MCF 10A (cell line): ENCODE measurements at regions of chr18 and their contacts with region 1.

Region 1: DNA sequence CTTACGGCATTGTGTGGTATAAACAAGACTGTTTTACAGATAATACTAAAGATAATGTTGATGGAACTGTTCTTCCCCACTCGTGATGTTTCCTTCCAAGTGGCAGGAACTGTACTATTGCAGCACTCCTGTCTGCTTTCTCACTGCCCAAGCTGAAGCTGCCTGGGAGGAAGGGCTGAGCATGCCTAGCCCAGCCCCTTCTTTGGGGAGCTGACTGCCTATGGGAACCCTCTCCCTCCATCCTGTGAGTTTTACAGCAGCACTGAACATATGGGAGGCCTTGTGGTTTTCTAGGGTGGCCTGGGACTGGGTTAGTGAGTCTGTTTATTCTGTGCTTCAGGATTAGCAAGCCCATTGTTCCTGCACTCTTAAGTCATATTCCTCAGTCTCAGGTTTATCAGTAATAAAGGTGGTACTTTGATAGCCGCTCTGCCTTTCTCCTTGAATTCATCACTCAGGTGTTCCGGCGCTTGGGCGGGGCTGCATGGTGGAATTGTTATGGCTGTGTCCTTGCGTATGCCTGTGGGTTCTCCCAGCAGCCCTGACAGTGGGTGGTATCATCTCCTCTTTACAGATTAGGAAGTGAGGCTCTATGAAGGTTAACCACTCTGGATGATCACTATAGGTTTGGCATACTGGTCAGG is 379.7 kb downstream of the PTPRM start:
- DNase-seq: peak; percentile 60
- H3K4me3 Mint-ChIP-seq: peak overlapping the region; percentile 66
- H3K27ac Mint-ChIP-seq: peak overlapping the region; percentile 82
- H3K4me1 Mint-ChIP-seq: peaks cover 54% of the 10 kb centered on the region
- H3K27me3 Mint-ChIP-seq: no peaks in the 10 kb centered on the region
- CTCF ChIP-seq: no peak

Region 2: DNA sequence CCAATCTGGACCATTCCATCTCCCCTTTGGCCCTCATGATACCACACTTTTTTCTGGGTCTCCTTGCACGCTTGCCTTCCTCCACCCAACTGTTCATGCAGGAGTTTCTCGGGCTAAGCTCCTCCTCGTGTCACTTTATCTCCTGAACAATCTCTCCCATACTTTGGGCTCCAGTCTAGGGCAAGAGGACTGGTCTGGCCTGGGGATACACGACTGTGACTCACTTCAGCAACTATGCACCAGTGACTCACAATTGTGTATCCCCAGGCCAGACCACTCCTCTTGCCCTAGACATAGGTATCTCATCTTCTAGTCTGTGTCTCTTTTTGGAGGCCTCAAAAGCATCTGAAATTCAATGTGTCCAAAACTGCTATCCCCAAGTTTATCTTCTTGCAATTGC is 529.1 kb before region 1 on chr18:
- CTCF ChIA-PET with region 1: no interaction called
- POLR2A ChIA-PET with region 1: no interaction called
- intact Hi-C with region 1: loop called (anchors 5 kb)
- DNase-seq: peak; percentile 95
- H3K4me3 Mint-ChIP-seq: peak overlapping the region; percentile 9
- H3K27ac Mint-ChIP-seq: peak overlapping the region; percentile 68
- H3K4me1 Mint-ChIP-seq: peaks cover 41% of the 10 kb centered on the region
- H3K27me3 Mint-ChIP-seq: no peaks in the 10 kb centered on the region
- CTCF ChIP-seq: no peak

Region 3: DNA sequence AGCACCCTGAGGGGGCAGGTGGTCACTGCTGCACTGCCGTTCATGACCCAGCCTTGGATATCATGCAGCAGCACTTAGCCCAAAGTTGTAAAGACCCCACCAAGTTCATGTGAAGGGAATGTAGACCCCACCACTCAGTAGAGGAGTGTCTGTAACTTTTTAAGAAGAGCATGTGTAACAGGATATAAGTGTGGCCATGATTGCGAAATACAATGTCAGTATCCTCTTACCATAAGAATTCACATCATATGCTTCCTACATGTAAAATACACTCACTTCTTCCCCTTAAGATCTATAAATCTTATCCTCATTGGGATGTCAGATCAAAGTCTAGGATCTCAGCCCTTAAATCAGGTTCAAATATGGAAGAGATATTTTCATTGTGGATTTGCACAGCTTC is 102.8 kb before region 1 on chr18:
- CTCF ChIA-PET with region 1: no interaction called
- POLR2A ChIA-PET with region 1: no interaction called
- intact Hi-C with region 1: no loop called
- DNase-seq: no peak
- H3K4me3 Mint-ChIP-seq: no peak overlapping the region
- H3K27ac Mint-ChIP-seq: no peak overlapping the region
- H3K4me1 Mint-ChIP-seq: no peaks in the 10 kb centered on the region
- H3K27me3 Mint-ChIP-seq: no peaks in the 10 kb centered on the region
- CTCF ChIP-seq: no peak

Region 4: GRCh38 chr18:7890075-7890474 is 56.8 kb before region 1 on chr18:
- CTCF ChIA-PET with region 1: no interaction called
- POLR2A ChIA-PET with region 1: no interaction called
- intact Hi-C with region 1: no loop called
- DNase-seq: no peak
- H3K4me3 Mint-ChIP-seq: no peak overlapping the region
- H3K27ac Mint-ChIP-seq: no peak overlapping the region
- H3K4me1 Mint-ChIP-seq: no peaks in the 10 kb centered on the region
- H3K27me3 Mint-ChIP-seq: no peaks in the 10 kb centered on the region
- CTCF ChIP-seq: no peak

Region 5: DNA sequence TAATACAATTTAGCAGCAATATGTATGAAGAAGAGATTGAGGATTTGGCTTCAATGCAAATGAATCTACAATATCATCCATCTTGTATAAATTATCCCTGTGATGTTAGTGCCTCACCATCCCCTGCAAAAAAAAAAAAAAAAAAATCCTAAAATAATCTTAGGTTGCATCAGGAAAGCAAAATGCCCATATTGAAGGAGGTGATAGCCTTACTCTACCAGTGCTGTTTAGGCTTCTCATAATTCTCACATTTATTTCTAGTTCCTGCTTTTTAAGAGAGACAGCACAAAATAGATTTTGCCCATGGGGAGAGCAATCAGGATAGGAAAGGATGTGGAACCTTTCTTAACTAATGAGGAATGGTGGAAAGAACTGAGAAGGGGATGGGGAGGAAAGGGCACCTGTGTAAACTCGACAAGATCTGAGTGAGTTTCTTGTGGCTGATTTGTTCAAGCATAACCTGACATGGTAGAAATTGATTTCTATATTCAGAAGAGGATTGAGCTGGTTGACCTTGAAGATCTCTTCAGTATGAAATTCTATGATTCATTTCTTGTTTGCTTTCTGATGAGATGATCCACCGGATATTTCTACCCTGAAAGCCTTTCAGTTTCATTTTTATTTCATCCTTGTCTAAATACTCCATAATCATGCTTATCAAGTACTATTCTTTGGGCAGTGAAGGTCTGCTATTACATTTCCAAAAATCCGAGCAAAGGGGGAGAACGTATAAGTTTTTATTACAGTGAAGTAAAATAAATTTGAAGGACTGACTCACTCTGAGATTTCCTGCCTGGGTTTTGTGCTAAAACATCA is 11.4 kb after region 1 on chr18:
- CTCF ChIA-PET with region 1: interaction called, 4 read pairs
- POLR2A ChIA-PET with region 1: interaction called, 15 read pairs
- intact Hi-C with region 1: no loop called
- DNase-seq: peak; percentile 24
- H3K4me3 Mint-ChIP-seq: peak overlapping the region; percentile 55
- H3K27ac Mint-ChIP-seq: peak overlapping the region; percentile 78
- H3K4me1 Mint-ChIP-seq: peaks cover 37% of the 10 kb centered on the region
- H3K27me3 Mint-ChIP-seq: no peaks in the 10 kb centered on the region
- CTCF ChIP-seq: no peak